Breast epithelium (tissue), 4 donors: ENCODE measurements at regions of chr7 and their contacts with region 1.

Region 1: GRCh38 chr7:9507290-9507689 is 1073.9 kb downstream of the NXPH1 start:
- DNase-seq: no peak
- H3K4me3 ChIP-seq: no peak overlapping the region
- H3K27ac ChIP-seq: no peak overlapping the region
- H3K4me1 ChIP-seq: no peaks in the 10 kb centered on the region
- H3K27me3 ChIP-seq: no peaks in the 10 kb centered on the region
- CTCF ChIP-seq: no peak
- POLR2A ChIP-seq: no peak

Region 2: GRCh38 chr7:8781166-8781565 is 726.1 kb before region 1 on chr7:
- intact Hi-C with region 1: no loop called
- DNase-seq: no peak
- H3K4me3 ChIP-seq: no peak overlapping the region
- H3K27ac ChIP-seq: no peak overlapping the region
- H3K4me1 ChIP-seq: no peaks in the 10 kb centered on the region
- H3K27me3 ChIP-seq: no peaks in the 10 kb centered on the region
- CTCF ChIP-seq: no peak
- POLR2A ChIP-seq: no peak

Region 3: DNA sequence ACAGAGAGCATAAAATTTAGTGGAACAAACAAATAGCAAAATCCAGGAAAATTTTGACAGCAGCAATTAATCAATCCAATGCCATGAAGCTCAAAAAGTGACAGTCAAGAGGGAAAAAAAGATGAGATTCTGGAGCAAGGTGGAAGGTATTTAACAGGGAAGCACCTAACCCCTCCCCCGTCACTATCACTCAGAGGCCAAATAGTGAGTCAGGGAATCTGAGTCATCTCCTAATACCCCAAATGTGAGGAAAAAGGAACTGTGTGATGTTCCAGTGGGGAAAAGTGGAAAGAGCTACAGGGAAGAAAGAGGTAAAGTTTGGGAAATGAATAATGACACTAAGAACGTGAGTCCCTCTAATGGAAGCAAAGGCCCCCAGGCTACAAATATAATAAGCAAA is 1353.2 kb after region 1 on chr7:
- intact Hi-C with region 1: loop called (anchors 5 kb)
- DNase-seq: no peak
- H3K4me3 ChIP-seq: no peak overlapping the region
- H3K27ac ChIP-seq: no peak overlapping the region
- H3K4me1 ChIP-seq: no peaks in the 10 kb centered on the region
- H3K27me3 ChIP-seq: no peaks in the 10 kb centered on the region
- CTCF ChIP-seq: no peak
- POLR2A ChIP-seq: no peak